SK-N-SH (cell line): ENCODE measurements at regions of chr5 and their contacts with region 1.

Region 1: DNA sequence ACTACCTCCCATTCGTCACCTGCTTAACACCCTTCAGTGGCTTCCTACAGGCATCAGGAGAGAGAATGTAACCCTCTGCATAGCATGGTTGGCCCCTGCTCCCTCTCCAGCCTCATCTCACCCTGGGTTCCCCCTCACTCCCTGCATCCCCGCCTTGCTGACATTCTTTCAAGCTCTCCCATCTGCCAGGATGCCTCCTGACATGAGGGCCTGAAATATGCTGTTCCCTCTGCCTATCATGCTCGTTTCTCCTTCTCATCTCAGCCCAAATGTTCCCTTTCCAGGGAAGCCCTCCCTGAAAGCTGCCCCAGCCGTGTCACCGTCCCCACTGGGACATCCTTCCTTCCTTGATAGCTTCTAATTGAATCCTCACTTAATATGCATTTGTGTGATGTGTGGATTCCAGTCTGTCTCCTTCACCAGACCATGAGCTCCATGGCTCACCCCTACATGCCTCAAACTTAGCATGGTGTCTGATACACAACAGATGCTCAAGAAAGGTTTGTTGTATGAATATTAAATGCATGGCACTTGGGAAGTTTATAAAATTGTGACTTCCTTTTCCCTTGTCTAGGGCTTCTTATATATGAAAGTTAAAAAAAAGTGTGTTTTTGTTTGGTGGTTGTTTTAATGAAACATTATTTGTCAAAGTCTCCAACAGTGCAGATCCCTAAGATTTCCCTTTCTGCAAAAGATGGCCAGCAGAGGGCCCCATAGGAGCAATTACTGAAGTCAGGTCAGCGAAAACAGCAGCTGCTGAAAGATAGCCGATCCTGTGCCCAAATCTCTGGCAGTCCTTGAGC is 7.3 kb upstream of the C5orf58 start:
- DNase-seq: peak; percentile 70
- H3K4me3 ChIP-seq: no peak overlapping the region; a peak in 1 of 4 replicates
- H3K27ac ChIP-seq: peak overlapping the region in 1 of 2 experiments; percentile 65; a peak in 2 of 4 replicates
- H3K4me1 ChIP-seq: peaks cover 3 to 21% of the 10 kb centered on the region in 2 experiments; a peak in 2 of 4 replicates
- H3K27me3 ChIP-seq: no peaks in the 10 kb centered on the region
- CTCF ChIP-seq: peak; percentile 89
- EP300 ChIP-seq: no peak
- RAD21 ChIP-seq: peak; percentile 93

Region 2: GRCh38 chr5:170028124-170028523 is 197.4 kb before region 1 on chr5:
- CTCF ChIA-PET with region 1: no interaction called
- POLR2A ChIA-PET with region 1: no interaction called
- DNase-seq: no peak
- H3K4me3 ChIP-seq: no peak overlapping the region
- H3K27ac ChIP-seq: no peak overlapping the region
- H3K4me1 ChIP-seq: no peaks in the 10 kb centered on the region; a peak in 1 of 4 replicates
- H3K27me3 ChIP-seq: no peaks in the 10 kb centered on the region
- CTCF ChIP-seq: no peak
- EP300 ChIP-seq: no peak
- RAD21 ChIP-seq: no peak

Region 3: DNA sequence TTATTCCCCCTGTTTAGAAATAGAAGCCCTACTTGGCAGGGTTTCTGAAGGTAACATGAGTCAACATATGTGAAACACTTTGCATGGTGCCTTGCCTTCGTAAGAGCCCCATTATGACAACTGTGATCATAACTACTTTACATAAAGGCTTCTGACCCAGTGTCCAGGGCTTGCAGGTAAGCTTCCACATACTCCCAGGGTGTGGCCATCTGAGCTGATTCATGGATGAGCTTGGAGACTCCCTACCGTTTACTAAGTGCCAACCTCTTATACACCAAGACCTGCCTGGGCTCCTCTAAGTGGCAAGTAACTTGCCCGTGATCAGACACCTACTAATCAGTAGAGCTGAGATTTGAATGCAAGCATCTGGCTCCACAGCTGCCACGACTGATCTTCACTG is 55.5 kb before region 1 on chr5:
- CTCF ChIA-PET with region 1: no interaction called
- POLR2A ChIA-PET with region 1: no interaction called
- DNase-seq: no peak
- H3K4me3 ChIP-seq: no peak overlapping the region
- H3K27ac ChIP-seq: no peak overlapping the region
- H3K4me1 ChIP-seq: peaks cover 0 to 12% of the 10 kb centered on the region in 2 experiments; a peak in 1 of 4 replicates
- H3K27me3 ChIP-seq: no peaks in the 10 kb centered on the region
- CTCF ChIP-seq: no peak
- EP300 ChIP-seq: no peak
- RAD21 ChIP-seq: no peak

Region 4: GRCh38 chr5:170247363-170247762 is 21.8 kb after region 1 on chr5:
- CTCF ChIA-PET with region 1: interaction called, 13 read pairs
- POLR2A ChIA-PET with region 1: no interaction called
- DNase-seq: no peak
- H3K4me3 ChIP-seq: no peak overlapping the region
- H3K27ac ChIP-seq: no peak overlapping the region
- H3K4me1 ChIP-seq: peaks cover 0 to 2% of the 10 kb centered on the region in 2 experiments; a peak in 2 of 4 replicates
- H3K27me3 ChIP-seq: no peaks in the 10 kb centered on the region
- CTCF ChIP-seq: no peak
- EP300 ChIP-seq: no peak
- RAD21 ChIP-seq: no peak

Region 5: GRCh38 chr5:170348137-170348633 is 122.7 kb after region 1 on chr5:
- CTCF ChIA-PET with region 1: interaction called, 25 read pairs
- POLR2A ChIA-PET with region 1: no interaction called
- DNase-seq: no peak
- H3K4me3 ChIP-seq: no peak overlapping the region
- H3K27ac ChIP-seq: no peak overlapping the region
- H3K4me1 ChIP-seq: peaks cover 0 to 7% of the 10 kb centered on the region in 2 experiments; a peak in 1 of 4 replicates
- H3K27me3 ChIP-seq: peaks cover 18% of the 10 kb centered on the region; the same call in 1 of the 2 replicates
- CTCF ChIP-seq: no peak
- EP300 ChIP-seq: no peak
- RAD21 ChIP-seq: peak; percentile 51; the same call in 1 of the 2 replicates

Region 6: GRCh38 chr5:170420780-170421412 is 195.4 kb after region 1 on chr5:
- CTCF ChIA-PET with region 1: interaction called, 257 read pairs
- POLR2A ChIA-PET with region 1: no interaction called
- DNase-seq: peak; percentile 77
- H3K4me3 ChIP-seq: no peak overlapping the region
- H3K27ac ChIP-seq: no peak overlapping the region
- H3K4me1 ChIP-seq: peaks cover 0 to 9% of the 10 kb centered on the region in 2 experiments; a peak in 1 of 4 replicates
- H3K27me3 ChIP-seq: peaks cover 20% of the 10 kb centered on the region
- CTCF ChIP-seq: peak; percentile 84
- EP300 ChIP-seq: no peak
- RAD21 ChIP-seq: peak; percentile 79

Region 7: DNA sequence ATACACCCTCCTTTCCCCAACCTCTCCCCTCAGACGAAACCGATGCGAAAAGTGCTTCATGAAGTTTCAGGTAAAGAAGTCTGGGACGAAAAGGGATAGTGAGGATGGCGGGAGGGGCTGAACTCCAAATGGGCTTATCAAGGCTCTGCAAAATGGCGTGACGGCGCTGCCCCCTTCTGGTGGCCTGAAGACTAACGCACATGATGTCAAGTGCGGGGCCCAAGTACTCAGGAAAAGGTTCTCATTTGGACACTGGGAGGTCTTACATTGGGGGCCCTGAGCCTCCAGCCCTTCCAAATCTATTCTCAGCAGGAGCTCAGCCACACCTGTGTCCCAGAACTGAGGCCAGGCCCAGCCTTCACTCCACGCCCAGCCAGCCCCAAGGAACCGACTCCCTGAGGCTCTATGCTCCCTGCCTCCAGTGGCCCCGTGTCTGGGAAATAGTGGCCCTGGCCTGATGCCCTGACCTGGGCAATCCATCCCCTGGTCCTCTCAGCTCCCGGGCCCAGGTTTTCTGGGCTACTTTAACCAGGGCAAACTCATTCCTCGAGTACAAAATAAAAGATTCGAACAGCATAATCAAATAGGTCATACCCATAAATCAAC is 398.2 kb after region 1 on chr5:
- CTCF ChIA-PET with region 1: interaction called, 33 read pairs
- POLR2A ChIA-PET with region 1: no interaction called
- DNase-seq: peak; percentile 63
- H3K4me3 ChIP-seq: no peak overlapping the region; a peak in 1 of 4 replicates
- H3K27ac ChIP-seq: no peak overlapping the region
- H3K4me1 ChIP-seq: peaks cover 0 to 5% of the 10 kb centered on the region in 2 experiments; a peak in 1 of 4 replicates
- H3K27me3 ChIP-seq: no peaks in the 10 kb centered on the region
- CTCF ChIP-seq: peak; percentile 81
- EP300 ChIP-seq: no peak
- RAD21 ChIP-seq: peak; percentile 89